ENCODE measurements at regions of chr12 and their contacts with region 1.

Region 1: DNA sequence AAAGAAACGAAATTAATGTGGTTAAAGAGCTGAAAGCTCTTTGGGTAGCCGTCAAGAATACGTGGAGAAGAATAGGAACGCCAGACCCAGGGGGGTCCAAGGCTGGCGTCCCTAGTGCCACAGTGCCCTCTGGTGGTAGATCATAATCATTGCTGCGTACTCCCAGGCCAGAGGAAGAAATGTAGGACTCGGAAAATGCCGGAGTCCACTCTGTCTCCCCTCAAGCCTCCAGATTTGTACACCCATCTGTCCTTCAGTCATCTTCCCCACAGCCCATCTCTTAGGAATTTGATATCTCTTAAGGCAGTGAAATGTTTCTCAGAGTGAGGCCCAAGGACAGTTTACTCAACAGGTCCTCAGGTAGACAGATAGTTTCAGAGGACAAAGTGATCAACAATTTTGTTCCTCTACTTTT is 25.4 kb upstream of the PLEKHG6 start:
- DNase-seq: peak; percentile 71
- H3K4me3 ChIP-seq: no peak overlapping the region
- H3K27ac ChIP-seq: no peak overlapping the region
- H3K4me1 ChIP-seq: peaks cover 5 to 22% (median 6%) of the 10 kb centered on the region in 4 donors
- H3K27me3 ChIP-seq: no peaks in the 10 kb centered on the region
- CTCF ChIP-seq: peak; percentile 91 to 96 (median 92)
- EP300 ChIP-seq: no peak
- POLR2A ChIP-seq: no peak

Region 2: DNA sequence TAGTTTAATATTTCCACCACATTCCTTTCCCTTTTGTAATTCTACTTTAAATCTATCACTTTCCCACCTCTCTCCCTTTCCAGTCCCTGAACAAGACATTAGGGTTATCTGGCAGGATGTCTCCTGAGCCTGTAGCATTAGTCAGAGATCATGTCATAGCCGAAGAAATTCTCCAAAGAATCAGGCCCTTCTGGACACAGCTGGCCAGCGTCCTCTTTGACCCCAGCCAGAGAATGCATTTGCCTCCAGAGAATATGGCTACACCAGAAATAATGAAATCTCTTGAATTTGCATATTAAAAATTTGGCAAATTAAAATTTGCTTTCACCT is 796.5 kb before region 1 on chr12:
- in situ Hi-C with region 1: no loop called
- intact Hi-C with region 1: no loop called
- DNase-seq: no peak
- H3K4me3 ChIP-seq: no peak overlapping the region
- H3K27ac ChIP-seq: peak overlapping the region in 2 of 4 donors; percentile 5 to 28
- H3K4me1 ChIP-seq: peaks cover 0 to 5% (median 0%) of the 10 kb centered on the region in 4 donors
- H3K27me3 ChIP-seq: no peaks in the 10 kb centered on the region
- CTCF ChIP-seq: no peak
- EP300 ChIP-seq: no peak
- POLR2A ChIP-seq: no peak

Region 3: DNA sequence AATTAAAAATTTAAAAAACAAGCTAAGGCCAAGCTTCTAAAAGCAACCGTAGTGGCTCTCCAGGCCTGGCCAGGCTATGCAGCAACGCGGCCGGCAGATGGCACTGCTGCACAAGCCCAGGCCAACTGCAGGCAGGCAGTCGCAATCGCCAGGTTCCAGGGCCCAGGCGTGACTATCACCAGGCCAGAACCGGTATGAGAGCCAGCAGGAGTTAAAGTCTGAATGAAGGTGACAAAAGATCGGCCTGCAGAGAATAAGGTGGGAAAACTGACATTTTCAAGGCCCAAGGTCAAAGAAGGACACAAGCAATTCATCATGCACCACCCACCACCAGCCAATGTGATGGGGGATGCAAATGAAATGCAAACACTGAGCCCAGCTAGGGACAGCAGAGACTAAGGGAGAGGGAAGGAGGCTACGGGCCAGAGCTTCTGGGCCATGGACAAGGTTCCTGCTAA is 296.4 kb before region 1 on chr12:
- in situ Hi-C with region 1: loop called in 2 of 4 experiments (anchors 10 kb)
- intact Hi-C with region 1: loop called (anchors 10 kb)
- DNase-seq: peak; percentile 79
- H3K4me3 ChIP-seq: no peak overlapping the region
- H3K27ac ChIP-seq: peak overlapping the region in 2 of 4 donors; percentile 24 to 26
- H3K4me1 ChIP-seq: no peaks in the 10 kb centered on the region
- H3K27me3 ChIP-seq: no peaks in the 10 kb centered on the region
- CTCF ChIP-seq: peak; percentile 91 to 97 (median 96)
- EP300 ChIP-seq: no peak
- POLR2A ChIP-seq: no peak

Region 4: GRCh38 chr12:5996459-5996858 is 288.6 kb before region 1 on chr12:
- in situ Hi-C with region 1: loop called in 1 of 4 experiments (anchors 10 kb)
- intact Hi-C with region 1: no loop called
- DNase-seq: no peak
- H3K4me3 ChIP-seq: no peak overlapping the region
- H3K27ac ChIP-seq: no peak overlapping the region
- H3K4me1 ChIP-seq: no peaks in the 10 kb centered on the region
- H3K27me3 ChIP-seq: peaks cover 7% of the 10 kb centered on the region
- CTCF ChIP-seq: no peak
- EP300 ChIP-seq: no peak
- POLR2A ChIP-seq: no peak

Region 5: DNA sequence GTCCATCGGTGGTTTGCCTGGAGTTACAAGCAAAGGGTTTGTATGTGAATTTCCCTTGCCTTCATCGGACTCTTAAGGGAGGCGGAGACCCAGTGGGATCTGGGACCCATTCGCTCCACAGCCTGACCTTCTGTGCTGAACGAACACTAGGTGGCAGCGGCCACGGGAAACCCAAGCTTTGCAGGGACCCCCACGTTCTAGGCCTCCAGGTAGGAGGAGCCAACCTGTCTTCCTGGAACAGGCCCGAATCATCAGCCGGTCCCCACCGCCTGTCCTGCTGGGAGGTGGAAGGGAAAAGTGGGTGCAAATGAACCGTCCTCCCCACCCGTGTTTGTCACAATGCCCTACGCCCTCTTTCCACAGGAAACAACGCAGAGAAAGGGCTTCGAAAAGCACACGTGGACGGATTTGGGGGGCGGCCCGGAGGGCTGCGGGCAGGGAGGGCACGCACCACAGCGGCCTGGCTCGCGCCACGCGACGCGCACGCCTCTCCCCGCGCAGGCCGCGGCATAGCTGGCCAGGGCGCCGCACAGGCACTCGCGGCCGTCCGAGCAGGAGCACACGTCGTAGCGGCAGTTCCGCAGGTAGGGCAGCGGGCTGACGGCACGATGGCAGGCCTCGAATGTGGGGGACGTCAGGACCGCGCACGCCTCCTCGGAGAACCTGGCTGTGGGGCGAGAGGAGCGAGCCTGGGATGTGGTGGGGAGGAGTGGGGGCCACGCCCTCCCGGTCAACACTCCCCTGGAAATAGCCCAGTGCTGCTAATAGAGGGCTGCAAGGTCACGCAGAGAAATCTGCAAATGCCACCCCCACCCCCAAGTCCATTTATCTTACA is 228.4 kb before region 1 on chr12:
- in situ Hi-C with region 1: loop called (anchors 5 to 10 kb)
- intact Hi-C with region 1: no loop called
- DNase-seq: no peak
- H3K4me3 ChIP-seq: peak overlapping the region in 2 of 4 donors; percentile 14 to 18
- H3K27ac ChIP-seq: no peak overlapping the region
- H3K4me1 ChIP-seq: peaks cover 4 to 9% (median 7%) of the 10 kb centered on the region in 4 donors
- H3K27me3 ChIP-seq: peaks cover 13% of the 10 kb centered on the region
- CTCF ChIP-seq: peak in 4 of 5 experiments; percentile 13 to 25 (median 20)
- EP300 ChIP-seq: no peak
- POLR2A ChIP-seq: no peak

Region 6: DNA sequence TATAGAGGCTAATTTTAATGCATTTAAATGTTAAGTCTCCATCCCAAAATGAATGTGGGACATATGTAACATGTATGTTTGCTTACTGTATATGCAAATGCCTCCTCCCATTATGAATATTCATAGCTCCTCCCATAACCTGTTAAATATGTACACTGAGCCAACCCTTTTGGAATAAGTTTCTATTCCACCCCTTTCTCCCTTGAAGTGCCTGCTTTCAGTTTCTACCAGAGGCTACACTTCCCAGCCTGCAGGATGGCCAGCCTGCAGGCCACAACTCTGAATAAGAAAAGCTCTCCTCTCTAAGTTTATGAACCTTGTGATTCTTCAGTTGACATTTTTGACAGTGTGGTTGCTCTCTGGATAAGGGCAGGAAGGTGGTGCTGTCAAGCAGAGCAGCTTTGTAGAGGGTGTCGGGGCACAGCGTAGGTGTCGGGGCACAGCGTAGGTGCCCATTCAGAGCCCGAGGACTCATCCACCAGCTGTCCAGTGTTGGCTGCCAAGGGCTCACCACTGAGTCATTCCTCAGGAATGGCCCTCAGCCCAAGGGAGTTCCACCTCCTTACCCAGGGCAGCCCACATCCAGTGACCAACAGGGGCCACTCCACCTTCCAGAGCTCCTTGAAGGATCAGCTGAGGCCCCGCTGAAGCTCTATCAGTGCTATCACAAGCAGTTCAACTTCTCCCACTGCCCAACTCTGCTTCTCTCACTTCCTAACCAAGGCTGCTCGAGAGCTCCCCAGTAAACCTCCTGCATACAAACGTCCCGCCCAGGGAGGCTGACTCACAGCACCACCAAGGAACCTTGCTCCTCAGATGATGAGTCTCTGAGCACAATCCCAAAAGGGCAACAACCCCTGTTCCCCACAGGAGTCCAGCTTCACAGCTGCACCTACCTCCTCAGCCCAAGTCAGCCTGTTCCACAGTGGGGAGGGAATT is 192.0 kb before region 1 on chr12:
- in situ Hi-C with region 1: no loop called
- intact Hi-C with region 1: no loop called
- DNase-seq: peak; percentile 45
- H3K4me3 ChIP-seq: no peak overlapping the region
- H3K27ac ChIP-seq: peak overlapping the region in 3 of 4 donors; percentile 4 to 20 (median 8)
- H3K4me1 ChIP-seq: peaks cover 0 to 24% (median 4%) of the 10 kb centered on the region in 4 donors
- H3K27me3 ChIP-seq: peaks cover 5% of the 10 kb centered on the region
- CTCF ChIP-seq: no peak
- EP300 ChIP-seq: no peak
- POLR2A ChIP-seq: no peak

Region 7: DNA sequence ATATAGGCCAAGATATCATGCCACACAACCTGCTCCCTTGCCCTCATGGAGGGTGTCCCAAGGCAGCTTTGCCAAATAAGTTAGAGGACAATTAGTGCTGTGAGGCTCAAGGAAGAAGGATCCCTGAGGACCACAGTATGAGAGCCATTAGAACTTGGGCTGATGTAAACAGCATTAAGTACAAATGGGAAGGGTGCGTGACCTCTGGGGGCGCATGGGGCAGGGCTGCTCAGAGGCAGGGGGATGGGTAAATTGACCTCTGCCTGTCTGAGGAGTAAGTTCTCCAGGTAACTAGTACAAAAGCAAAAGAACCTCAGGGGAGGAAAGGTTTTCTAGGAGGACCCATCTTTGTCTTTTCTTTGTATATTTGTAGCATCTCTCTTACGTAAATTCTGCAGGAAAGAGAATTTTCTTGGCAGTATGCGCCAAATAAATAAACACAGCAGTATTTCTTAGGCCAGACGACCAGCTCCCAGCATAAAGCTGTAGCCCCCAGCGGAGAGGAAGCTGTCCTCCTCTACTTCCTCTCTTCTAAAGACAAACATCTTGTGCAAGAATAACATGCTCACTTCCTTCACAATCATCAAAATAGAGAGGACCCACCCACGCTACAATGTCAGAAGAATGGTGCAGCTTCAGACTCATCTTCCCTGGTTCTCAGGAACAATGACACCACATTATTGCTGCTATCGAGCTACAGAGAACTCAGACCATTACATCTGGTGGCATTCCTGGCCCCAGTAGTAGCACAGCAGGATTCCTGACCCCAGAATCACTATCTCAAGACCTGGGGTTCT is 144.2 kb before region 1 on chr12:
- in situ Hi-C with region 1: no loop called
- intact Hi-C with region 1: no loop called
- DNase-seq: no peak
- H3K4me3 ChIP-seq: no peak overlapping the region
- H3K27ac ChIP-seq: peak overlapping the region; percentile 45 to 68 (median 66)
- H3K4me1 ChIP-seq: peaks cover 0 to 26% (median 0%) of the 10 kb centered on the region in 4 donors
- H3K27me3 ChIP-seq: no peaks in the 10 kb centered on the region
- CTCF ChIP-seq: no peak
- EP300 ChIP-seq: no peak
- POLR2A ChIP-seq: no peak

Region 8: DNA sequence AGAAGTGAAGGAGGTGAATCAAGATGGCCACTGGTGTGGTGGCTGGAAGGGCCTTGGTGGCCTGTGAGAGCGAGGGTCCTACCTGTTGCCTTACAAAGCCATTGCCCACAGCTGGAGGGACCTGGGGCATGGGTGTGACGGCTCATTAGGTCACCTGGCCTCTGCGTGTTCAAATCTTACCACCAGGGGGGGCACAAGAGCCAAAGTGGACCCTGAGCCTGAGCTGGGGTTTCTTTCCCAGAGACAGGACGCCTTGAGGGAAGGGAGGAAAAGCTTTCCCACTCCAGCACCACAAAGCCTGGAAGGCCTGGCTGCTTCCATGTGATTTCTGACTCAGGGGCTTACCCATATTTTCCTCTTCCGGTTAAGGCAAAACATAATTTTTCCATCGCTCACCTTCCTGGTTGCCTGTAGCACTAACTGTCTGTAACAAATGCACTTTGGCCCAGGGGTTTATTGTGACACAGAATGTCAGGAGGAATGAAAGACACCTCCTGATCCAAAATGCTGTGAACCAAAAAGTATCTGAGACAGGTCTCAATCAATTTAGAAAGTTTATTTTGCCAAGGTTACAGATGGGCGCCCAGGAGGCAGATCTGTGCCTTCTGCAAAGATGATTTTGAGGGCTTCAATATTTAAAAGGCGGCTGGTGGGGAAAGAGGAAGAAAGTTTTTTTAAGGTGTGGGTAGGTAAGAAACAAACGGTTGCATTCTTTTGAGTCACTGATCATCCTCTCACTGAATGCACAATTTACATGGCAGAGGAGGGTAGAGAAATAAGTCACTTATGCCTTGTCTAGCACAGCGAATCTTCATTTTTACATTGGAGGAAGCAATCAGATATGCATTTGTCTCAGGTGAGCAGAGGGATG is 89.2 kb before region 1 on chr12:
- in situ Hi-C with region 1: loop called in 2 of 4 experiments (anchors 10 kb)
- intact Hi-C with region 1: loop called (anchors 2 kb)
- DNase-seq: peak; percentile 92
- H3K4me3 ChIP-seq: no peak overlapping the region
- H3K27ac ChIP-seq: peak overlapping the region; percentile 93 to 99 (median 95)
- H3K4me1 ChIP-seq: peaks cover 11 to 40% (median 36%) of the 10 kb centered on the region in 4 donors
- H3K27me3 ChIP-seq: no peaks in the 10 kb centered on the region
- CTCF ChIP-seq: peak; percentile 89 to 99 (median 93)
- EP300 ChIP-seq: peak; percentile 69
- POLR2A ChIP-seq: no peak

Measured in transverse colon (tissue), 4 donors.